ENCODE measurements at regions of chr15 and their contacts with region 1.

Region 1: GRCh38 chr15:96327155-96327741 is 3.3 kb upstream of the NR2F2 start:
- DNase-seq: peak; percentile 90
- ATAC-seq: peak; percentile 7
- H3K4me3 ChIP-seq: peak overlapping the region; percentile 85
- H3K27ac ChIP-seq: peak overlapping the region; percentile 91
- H3K4me1 ChIP-seq: peaks cover 47% of the 10 kb centered on the region
- H3K27me3 ChIP-seq: no peaks in the 10 kb centered on the region
- CTCF ChIP-seq: peak; percentile 81

Region 2: GRCh38 chr15:95259513-95259912 is 1067.7 kb before region 1 on chr15:
- CTCF ChIA-PET with region 1: interaction called, 3 read pairs
- POLR2A ChIA-PET with region 1: no interaction called
- intact Hi-C with region 1: loop called (anchors 5 kb)
- DNase-seq: peak; percentile 82
- ATAC-seq: peak; percentile 77
- H3K4me3 ChIP-seq: no peak overlapping the region
- H3K27ac ChIP-seq: no peak overlapping the region
- H3K4me1 ChIP-seq: peaks cover 5% of the 10 kb centered on the region; the same call in 1 of the 2 replicates
- H3K27me3 ChIP-seq: no peaks in the 10 kb centered on the region
- CTCF ChIP-seq: peak; percentile 81

Region 3: GRCh38 chr15:95932676-95933075 is 394.6 kb before region 1 on chr15:
- CTCF ChIA-PET with region 1: interaction called, 6 read pairs
- POLR2A ChIA-PET with region 1: interaction called, 6 read pairs
- intact Hi-C with region 1: loop called (anchors 2 kb)
- DNase-seq: peak; percentile 83
- ATAC-seq: peak; percentile 96
- H3K4me3 ChIP-seq: peak overlapping the region; percentile 4; the same call in 1 of the 2 replicates
- H3K27ac ChIP-seq: peak overlapping the region; percentile 68
- H3K4me1 ChIP-seq: peaks cover 22% of the 10 kb centered on the region
- H3K27me3 ChIP-seq: no peaks in the 10 kb centered on the region
- CTCF ChIP-seq: no peak

Region 4: GRCh38 chr15:96122077-96122681 is 205.1 kb before region 1 on chr15:
- CTCF ChIA-PET with region 1: no interaction called
- POLR2A ChIA-PET with region 1: interaction called, 3 read pairs
- intact Hi-C with region 1: loop called (anchors 5 kb)
- DNase-seq: peak; percentile 76
- ATAC-seq: peak; percentile 91
- H3K4me3 ChIP-seq: no peak overlapping the region
- H3K27ac ChIP-seq: peak overlapping the region; percentile 60
- H3K4me1 ChIP-seq: peaks cover 26% of the 10 kb centered on the region
- H3K27me3 ChIP-seq: no peaks in the 10 kb centered on the region
- CTCF ChIP-seq: no peak

Region 5: GRCh38 chr15:96273317-96274086 is 53.7 kb before region 1 on chr15:
- CTCF ChIA-PET with region 1: interaction called, 3 read pairs
- POLR2A ChIA-PET with region 1: no interaction called
- intact Hi-C with region 1: loop called (anchors 2 kb)
- DNase-seq: peak; percentile 98
- ATAC-seq: peak; percentile 91
- H3K4me3 ChIP-seq: peak overlapping the region; percentile 49; the same call in 1 of the 2 replicates
- H3K27ac ChIP-seq: peak overlapping the region; percentile 88
- H3K4me1 ChIP-seq: peaks cover 76% of the 10 kb centered on the region
- H3K27me3 ChIP-seq: no peaks in the 10 kb centered on the region
- CTCF ChIP-seq: no peak

Region 6: DNA sequence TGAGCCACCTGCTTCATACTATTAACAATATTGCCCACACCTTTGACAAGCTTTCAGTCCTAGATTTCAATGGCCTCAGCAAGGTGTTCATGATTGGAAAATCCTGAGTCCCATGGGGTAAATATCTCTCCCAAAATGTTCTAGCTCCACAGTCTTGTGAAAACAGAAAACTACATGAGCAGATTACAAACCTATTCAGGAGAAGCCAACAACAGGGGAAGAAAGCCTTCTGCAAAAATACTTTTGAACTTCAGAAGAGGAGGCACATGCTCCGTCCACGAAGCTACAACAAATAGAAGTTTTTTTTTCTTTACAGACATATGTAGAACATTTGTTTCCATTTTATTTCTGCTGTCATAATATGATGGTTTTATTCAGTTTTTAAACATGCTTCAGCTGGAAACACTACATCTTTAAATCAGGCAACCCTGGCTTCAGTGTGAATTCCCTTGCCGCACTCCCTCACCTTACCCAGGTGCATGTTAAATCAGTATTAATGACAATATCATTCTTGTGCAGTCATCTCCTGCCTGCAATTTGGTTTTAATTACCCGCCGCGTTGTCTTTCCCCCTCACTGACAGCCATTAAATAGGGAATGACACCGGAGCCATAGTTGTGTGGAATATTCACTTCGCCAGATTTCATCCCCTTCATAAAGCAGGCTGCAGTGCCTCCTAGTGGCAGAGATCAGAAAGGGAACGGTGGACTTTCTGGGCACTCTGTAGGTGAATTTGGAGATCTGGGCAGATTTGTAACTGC is 907.8 kb after region 1 on chr15:
- CTCF ChIA-PET with region 1: no interaction called
- POLR2A ChIA-PET with region 1: no interaction called
- intact Hi-C with region 1: loop called (anchors 10 kb)
- DNase-seq: peak; percentile 70
- ATAC-seq: peak; percentile 63
- H3K4me3 ChIP-seq: peak overlapping the region; percentile 11; the same call in 1 of the 2 replicates
- H3K27ac ChIP-seq: no peak overlapping the region
- H3K4me1 ChIP-seq: no peaks in the 10 kb centered on the region
- H3K27me3 ChIP-seq: peaks cover 55% of the 10 kb centered on the region
- CTCF ChIP-seq: peak; percentile 92

Measured in PC-3 (cell line).